ENCODE measurements at regions of chr2 and their contacts with region 1.

Region 1: GRCh38 chr2:20051532-20052228 is at the start of gene LAPTM4A:
- DNase-seq: peak; percentile 100
- H3K4me3 Mint-ChIP-seq: no peak within 1 kb of the TSS
- H3K27ac Mint-ChIP-seq: no peak within 1 kb of the TSS
- H3K4me1 Mint-ChIP-seq: peaks cover 24% of the 10 kb centered on the region
- H3K27me3 Mint-ChIP-seq: no peaks in the 10 kb centered on the region
- CTCF ChIP-seq: no peak
- total RNA-seq, gene LAPTM4A: 145 and 160 TPM in 2 replicates

Region 2: GRCh38 chr2:19955544-19956422 is 95.9 kb before region 1 on chr2:
- CTCF ChIA-PET with region 1: no interaction called
- POLR2A ChIA-PET with region 1: no interaction called
- intact Hi-C with region 1: loop called (anchors 2 kb)
- DNase-seq: peak; percentile 72
- H3K4me3 Mint-ChIP-seq: no peak overlapping the region
- H3K27ac Mint-ChIP-seq: no peak overlapping the region
- H3K4me1 Mint-ChIP-seq: no peaks in the 10 kb centered on the region
- H3K27me3 Mint-ChIP-seq: no peaks in the 10 kb centered on the region
- CTCF ChIP-seq: peak; percentile 82

Region 3: DNA sequence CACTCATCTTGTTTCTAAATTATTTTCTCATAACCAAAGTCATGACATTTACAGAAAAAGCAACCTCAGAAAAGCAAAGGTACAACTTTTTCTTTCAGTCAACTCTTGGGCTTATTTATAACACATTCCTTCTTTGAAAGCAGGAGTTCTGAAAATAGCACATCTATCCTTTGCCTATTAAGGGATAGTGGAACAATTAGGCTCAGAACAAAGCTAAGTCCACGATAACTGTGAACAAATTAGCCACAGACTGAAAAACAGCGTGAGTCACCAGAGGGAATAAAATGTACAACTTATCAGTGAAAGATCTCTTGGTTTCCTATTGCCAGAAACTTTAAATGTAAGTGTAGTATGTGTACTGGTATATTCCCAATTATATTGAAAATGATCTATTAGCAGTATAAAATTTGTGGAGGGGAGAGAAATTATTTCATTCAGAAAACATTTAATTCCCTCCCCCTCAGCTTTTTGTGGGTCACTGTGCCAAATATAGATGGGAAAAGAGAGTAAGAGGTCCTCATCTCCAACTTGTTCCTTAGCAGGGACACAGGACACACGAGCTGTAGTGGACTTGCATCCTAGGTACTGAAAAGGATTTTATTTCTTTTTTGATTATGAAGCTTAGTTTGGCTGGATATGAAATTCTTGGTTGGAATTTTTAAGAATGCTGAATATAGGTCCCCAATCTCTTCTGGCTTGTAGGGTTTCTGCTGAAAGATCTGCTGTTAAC is 23.8 kb before region 1 on chr2:
- CTCF ChIA-PET with region 1: no interaction called
- POLR2A ChIA-PET with region 1: interaction called, 96 read pairs
- intact Hi-C with region 1: no loop called
- DNase-seq: no peak
- H3K4me3 Mint-ChIP-seq: no peak overlapping the region
- H3K27ac Mint-ChIP-seq: peak overlapping the region; percentile 39
- H3K4me1 Mint-ChIP-seq: peaks cover 8% of the 10 kb centered on the region
- H3K27me3 Mint-ChIP-seq: no peaks in the 10 kb centered on the region
- CTCF ChIP-seq: no peak

Region 4: DNA sequence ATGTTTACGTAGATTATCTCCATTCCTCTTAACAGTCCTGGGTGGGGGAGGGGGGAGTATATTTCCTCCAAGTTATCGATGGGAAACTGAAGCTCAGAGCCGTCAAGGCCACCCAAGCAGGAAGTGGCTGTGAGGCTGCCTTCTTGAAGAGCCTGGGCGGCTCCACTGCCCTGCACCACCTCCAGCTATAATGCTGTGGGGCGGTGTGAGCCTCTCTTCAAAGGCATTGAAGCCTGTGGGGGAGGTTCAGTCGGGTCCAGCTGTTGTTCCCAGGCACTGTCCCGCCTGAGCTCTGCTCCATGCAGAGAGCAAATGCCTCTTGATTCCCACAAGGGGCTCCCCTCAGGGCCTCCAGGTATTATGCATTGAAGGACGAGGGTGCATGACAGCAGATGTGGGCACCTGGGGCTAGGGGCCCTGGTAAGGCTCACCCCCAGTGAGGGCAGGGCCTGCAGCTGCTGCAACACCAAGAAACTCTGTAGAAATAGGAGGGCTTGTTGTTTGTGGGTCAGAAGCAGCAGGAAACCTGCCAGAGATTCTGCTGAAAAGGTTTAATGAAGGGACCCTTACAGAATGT is 29.2 kb after region 1 on chr2:
- CTCF ChIA-PET with region 1: interaction called, 3 read pairs
- POLR2A ChIA-PET with region 1: interaction called, 17 read pairs
- intact Hi-C with region 1: no loop called
- DNase-seq: no peak
- H3K4me3 Mint-ChIP-seq: no peak overlapping the region
- H3K27ac Mint-ChIP-seq: no peak overlapping the region
- H3K4me1 Mint-ChIP-seq: no peaks in the 10 kb centered on the region
- H3K27me3 Mint-ChIP-seq: no peaks in the 10 kb centered on the region
- CTCF ChIP-seq: no peak

Region 5: GRCh38 chr2:20212459-20212870 is 160.8 kb after region 1 on chr2:
- CTCF ChIA-PET with region 1: no interaction called
- POLR2A ChIA-PET with region 1: interaction called, 19 read pairs
- intact Hi-C with region 1: no loop called
- DNase-seq: peak; percentile 90
- H3K4me3 Mint-ChIP-seq: peak overlapping the region; percentile 59
- H3K27ac Mint-ChIP-seq: peak overlapping the region; percentile 88
- H3K4me1 Mint-ChIP-seq: peaks cover 73% of the 10 kb centered on the region
- H3K27me3 Mint-ChIP-seq: no peaks in the 10 kb centered on the region
- CTCF ChIP-seq: no peak

Region 6: GRCh38 chr2:20350753-20351554 is 299.3 kb after region 1 on chr2 and contains the start of gene PUM2:
- CTCF ChIA-PET with region 1: no interaction called
- POLR2A ChIA-PET with region 1: interaction called, 12 read pairs
- intact Hi-C with region 1: no loop called
- DNase-seq: peak; percentile 96
- H3K4me3 Mint-ChIP-seq: no peak within 1 kb of the TSS
- H3K27ac Mint-ChIP-seq: no peak within 1 kb of the TSS
- H3K4me1 Mint-ChIP-seq: peaks cover 20% of the 10 kb centered on the region
- H3K27me3 Mint-ChIP-seq: no peaks in the 10 kb centered on the region
- CTCF ChIP-seq: no peak
- total RNA-seq, gene PUM2: 86.7 and 94.0 TPM in 2 replicates

Region 7: DNA sequence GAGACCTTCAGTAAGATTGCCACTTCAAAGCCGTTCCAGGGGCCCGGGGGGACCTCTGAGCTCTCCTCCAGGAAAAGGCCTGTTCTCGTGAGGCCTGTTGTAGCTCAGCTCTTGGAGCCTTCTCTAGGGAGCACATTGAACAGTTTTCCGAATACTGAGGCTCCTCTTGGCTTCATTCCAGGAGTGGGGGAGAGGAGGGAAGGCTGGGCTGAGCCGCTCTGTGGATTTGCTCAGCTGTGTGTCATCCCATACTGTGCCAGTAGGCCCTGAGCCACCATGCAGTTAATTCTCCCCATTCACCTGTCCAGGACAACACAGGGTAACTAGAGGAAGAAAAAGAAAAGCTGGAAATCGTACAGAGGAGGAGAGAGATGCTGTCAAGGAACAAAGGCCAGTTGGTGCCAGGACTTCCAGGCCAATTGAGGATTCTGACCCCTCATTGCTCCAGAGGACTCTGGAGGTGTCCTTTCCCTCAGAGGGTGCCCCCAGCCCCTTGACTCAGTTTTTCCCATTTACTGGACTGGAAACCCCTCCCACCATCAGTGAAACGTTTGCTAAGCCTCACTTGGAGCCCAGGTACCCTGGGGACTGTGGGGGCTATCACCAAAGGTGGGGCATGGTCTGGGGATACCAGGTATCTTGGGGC is 557.8 kb after region 1 on chr2:
- CTCF ChIA-PET with region 1: no interaction called
- POLR2A ChIA-PET with region 1: no interaction called
- intact Hi-C with region 1: no loop called
- DNase-seq: peak; percentile 78
- H3K4me3 Mint-ChIP-seq: no peak overlapping the region
- H3K27ac Mint-ChIP-seq: no peak overlapping the region
- H3K4me1 Mint-ChIP-seq: peaks cover 27% of the 10 kb centered on the region
- H3K27me3 Mint-ChIP-seq: no peaks in the 10 kb centered on the region
- CTCF ChIP-seq: no peak